Lower lobe of right lung (tissue), 2 donors: ENCODE measurements at regions of chr3 and their contacts with region 1.

Region 1: GRCh38 chr3:39288300-39288808 is 8.5 kb upstream of the CX3CR1 start:
- DNase-seq: peak; percentile 82
- ATAC-seq: peak; percentile 95
- H3K4me3 ChIP-seq: no peak overlapping the region
- H3K27ac ChIP-seq: no peak overlapping the region
- H3K4me1 ChIP-seq: peaks cover 3% of the 10 kb centered on the region
- H3K27me3 ChIP-seq: no peaks in the 10 kb centered on the region
- CTCF ChIP-seq: peak; percentile 90

Region 2: GRCh38 chr3:39126532-39127071 is 161.8 kb before region 1 on chr3:
- intact Hi-C with region 1: loop called (anchors 10 kb)
- DNase-seq: peak; percentile 52
- ATAC-seq: peak; percentile 66
- H3K4me3 ChIP-seq: no peak overlapping the region
- H3K27ac ChIP-seq: no peak overlapping the region
- H3K4me1 ChIP-seq: peaks cover 15% of the 10 kb centered on the region
- H3K27me3 ChIP-seq: no peaks in the 10 kb centered on the region
- CTCF ChIP-seq: peak; percentile 62

Region 3: DNA sequence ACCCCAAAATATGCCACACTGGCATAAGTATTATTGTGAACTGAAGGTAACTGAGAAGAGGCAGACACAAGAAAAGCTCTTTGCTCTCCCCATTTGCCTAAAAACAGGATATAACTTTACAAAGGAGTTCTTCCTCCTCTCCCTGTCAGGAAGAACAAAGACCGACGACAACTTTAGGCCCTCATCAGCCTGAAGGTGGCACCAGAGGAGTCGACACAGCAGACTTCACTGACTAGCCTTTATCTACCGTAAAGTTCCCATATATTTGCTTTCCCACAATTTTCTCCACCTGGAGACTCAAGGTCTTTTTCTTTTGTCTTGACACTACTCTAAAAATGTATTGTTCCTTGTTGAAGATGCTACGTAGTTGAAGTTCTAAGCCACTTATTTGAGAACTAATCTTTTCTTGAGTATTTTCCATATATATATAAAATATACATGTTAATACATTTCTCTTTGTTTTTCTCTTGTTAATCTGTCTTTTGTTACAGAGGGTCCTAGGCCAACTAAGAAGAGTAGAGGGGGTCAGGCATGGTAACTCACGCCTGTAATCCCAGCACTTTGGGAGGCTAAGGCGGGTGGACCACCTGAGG is 79.8 kb before region 1 on chr3:
- intact Hi-C with region 1: loop called (anchors 10 kb)
- DNase-seq: peak; percentile 53
- ATAC-seq: peak; percentile 68 to 79
- H3K4me3 ChIP-seq: no peak overlapping the region
- H3K27ac ChIP-seq: peak overlapping the region; percentile 24
- H3K4me1 ChIP-seq: peaks cover 15% of the 10 kb centered on the region
- H3K27me3 ChIP-seq: no peaks in the 10 kb centered on the region
- CTCF ChIP-seq: peak; percentile 63